ENCODE measurements at regions of chr15 and their contacts with region 1.

Region 1: GRCh38 chr15:33654860-33655259 is 313.4 kb upstream of the CHRM5 start:
- DNase-seq: no peak
- H3K4me3 ChIP-seq: no peak overlapping the region
- H3K27ac ChIP-seq: no peak overlapping the region
- H3K4me1 ChIP-seq: no peaks in the 10 kb centered on the region
- H3K27me3 ChIP-seq: no peaks in the 10 kb centered on the region
- CTCF ChIP-seq: no peak
- EP300 ChIP-seq: no peak
- POLR2A ChIP-seq: no peak

Region 2: DNA sequence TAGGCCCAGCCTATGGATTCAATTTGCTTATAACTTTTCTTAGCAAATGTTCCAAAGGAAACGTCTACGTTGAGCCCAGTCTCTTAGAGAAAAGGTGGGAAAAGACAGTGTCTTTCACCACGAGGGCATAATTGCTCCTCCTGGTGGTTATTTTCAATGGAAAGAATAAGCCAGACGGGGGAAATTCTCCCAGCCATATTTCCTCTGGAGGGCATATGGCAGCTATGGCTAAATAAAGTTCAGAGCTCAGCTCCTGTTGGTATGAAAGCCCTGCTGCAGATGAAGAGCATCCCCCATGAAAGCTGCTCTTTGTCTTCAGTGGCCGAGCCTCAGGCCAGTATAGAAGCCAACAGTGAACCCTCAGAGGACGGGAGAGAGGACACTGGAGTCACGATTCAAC is 46.1 kb before region 1 on chr15:
- in situ Hi-C with region 1: loop called in 1 of 4 experiments (anchors 10 kb)
- intact Hi-C with region 1: no loop called
- DNase-seq: no peak
- H3K4me3 ChIP-seq: no peak overlapping the region
- H3K27ac ChIP-seq: no peak overlapping the region
- H3K4me1 ChIP-seq: no peaks in the 10 kb centered on the region
- H3K27me3 ChIP-seq: no peaks in the 10 kb centered on the region
- CTCF ChIP-seq: peak in 1 of 5 experiments; percentile 12
- EP300 ChIP-seq: no peak
- POLR2A ChIP-seq: no peak